Ovary (tissue), 10 donors: ENCODE measurements at regions of chr6 and their contacts with region 1.

Region 1: GRCh38 chr6:33579828-33580714 is at the start of gene BAK1:
- DNase-seq: peak; percentile 87 to 91 (median 88)
- H3K4me3 ChIP-seq: peak within 1 kb of the TSS; percentile 59
- H3K27ac ChIP-seq: peak within 1 kb of the TSS; percentile 46 to 81
- H3K4me1 ChIP-seq: peaks cover 10% of the 10 kb centered on the region
- H3K27me3 ChIP-seq: no peaks in the 10 kb centered on the region
- CTCF ChIP-seq: peak; percentile 58 to 68 (median 62)
- EP300 ChIP-seq: no peak
- POLR2A ChIP-seq: peak; percentile 47
- total RNA-seq, gene BAK1: 3.9 to 16.9 (median 10.4) TPM

Region 2: DNA sequence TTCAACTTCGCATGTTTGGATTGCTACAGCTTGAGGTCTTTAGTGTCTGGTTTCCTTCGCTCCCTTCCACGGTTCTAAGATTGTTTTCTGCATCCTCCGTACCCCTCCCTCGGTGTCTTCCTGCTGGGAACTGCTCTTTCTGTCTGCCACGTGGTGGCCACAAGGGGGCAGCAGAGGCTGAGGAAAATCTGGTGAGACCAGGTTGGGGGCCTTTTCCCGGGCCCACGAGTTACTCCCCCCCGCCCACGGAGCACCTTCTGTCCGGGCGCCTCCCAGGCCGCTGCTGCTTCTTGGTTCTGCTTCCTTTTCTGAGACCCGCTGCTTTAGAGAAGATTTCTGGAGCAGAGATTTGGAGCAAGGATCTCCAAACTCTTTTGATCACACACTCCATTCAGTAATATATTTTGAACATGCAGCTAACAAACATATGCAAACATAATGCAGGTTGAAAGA is 1335.1 kb before region 1 on chr6:
- intact Hi-C with region 1: no loop called
- DNase-seq: peak; percentile 88 to 94 (median 92)
- H3K4me3 ChIP-seq: no peak overlapping the region
- H3K27ac ChIP-seq: peak overlapping the region; percentile 0 to 30
- H3K4me1 ChIP-seq: no peaks in the 10 kb centered on the region
- H3K27me3 ChIP-seq: no peaks in the 10 kb centered on the region
- CTCF ChIP-seq: peak; percentile 82 to 91 (median 90)
- EP300 ChIP-seq: no peak
- POLR2A ChIP-seq: no peak

Region 3: DNA sequence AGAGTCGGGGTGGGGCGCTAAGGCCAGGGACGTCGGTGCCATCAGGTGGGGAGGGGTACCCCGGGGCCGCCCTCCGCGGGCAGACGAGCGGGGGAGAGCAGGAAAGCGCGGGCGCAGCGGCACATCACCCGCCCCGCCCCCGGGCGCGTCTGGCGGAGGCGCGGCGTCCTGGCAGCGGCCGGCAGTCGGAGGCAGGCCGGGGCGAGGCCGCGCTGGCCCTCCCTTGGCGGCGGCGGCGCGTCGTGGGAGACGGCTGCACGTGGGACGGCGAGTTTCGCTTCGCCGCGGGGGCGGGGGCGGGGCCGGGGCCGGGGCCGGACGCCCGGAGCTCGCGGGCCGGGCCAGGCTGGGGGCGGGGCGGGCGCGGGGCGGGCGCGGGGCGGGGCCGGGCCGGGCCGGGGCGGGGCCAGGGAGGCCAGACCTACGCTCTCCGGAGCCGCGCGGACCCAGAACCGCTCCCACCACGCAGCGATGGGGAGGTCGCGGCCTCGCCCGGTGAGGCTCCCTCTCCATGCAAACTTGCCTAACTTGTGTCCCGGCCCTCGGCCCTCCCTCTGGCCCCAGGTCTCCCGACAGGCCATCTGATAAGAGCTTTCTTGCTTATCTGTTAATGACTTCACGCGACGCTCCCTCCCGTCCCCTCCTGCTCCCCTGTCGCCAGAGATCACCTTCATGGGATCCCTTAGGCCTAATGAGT is 53.5 kb after region 1 on chr6:
- intact Hi-C with region 1: loop called in 1 of 4 experiments (anchors 10 kb)
- DNase-seq: peak; percentile 76 to 88 (median 80)
- H3K4me3 ChIP-seq: peak overlapping the region; percentile 30
- H3K27ac ChIP-seq: peak overlapping the region in 1 of 2 donors; percentile 61
- H3K4me1 ChIP-seq: peaks cover 5% of the 10 kb centered on the region
- H3K27me3 ChIP-seq: no peaks in the 10 kb centered on the region
- CTCF ChIP-seq: no peak
- EP300 ChIP-seq: no peak
- POLR2A ChIP-seq: no peak

Region 4: GRCh38 chr6:33700391-33701050 is 120.5 kb after region 1 on chr6:
- intact Hi-C with region 1: loop called (anchors 5 to 10 kb)
- DNase-seq: peak in 4 of 5 donors; percentile 53 to 74 (median 63)
- H3K4me3 ChIP-seq: no peak overlapping the region
- H3K27ac ChIP-seq: peak overlapping the region in 1 of 2 donors; percentile 64
- H3K4me1 ChIP-seq: peaks cover 10% of the 10 kb centered on the region
- H3K27me3 ChIP-seq: no peaks in the 10 kb centered on the region
- CTCF ChIP-seq: peak in 2 of 3 donors; percentile 18 to 33
- EP300 ChIP-seq: no peak
- POLR2A ChIP-seq: no peak

Region 5: GRCh38 chr6:33751771-33752645 is 171.9 kb after region 1 on chr6:
- intact Hi-C with region 1: loop called in 1 of 4 experiments (anchors 10 kb)
- DNase-seq: no peak
- H3K4me3 ChIP-seq: no peak overlapping the region
- H3K27ac ChIP-seq: no peak overlapping the region
- H3K4me1 ChIP-seq: no peaks in the 10 kb centered on the region
- H3K27me3 ChIP-seq: no peaks in the 10 kb centered on the region
- CTCF ChIP-seq: no peak
- EP300 ChIP-seq: no peak
- POLR2A ChIP-seq: no peak

Region 6: GRCh38 chr6:33788694-33789549 is 208.9 kb after region 1 on chr6 and contains the start of gene LEMD2:
- intact Hi-C with region 1: loop called in 1 of 4 experiments (anchors 5 kb)
- DNase-seq: peak; percentile 93 to 98 (median 96)
- H3K4me3 ChIP-seq: peak within 1 kb of the TSS; percentile 82
- H3K27ac ChIP-seq: peak within 1 kb of the TSS; percentile 93 to 99
- H3K4me1 ChIP-seq: peaks cover 22% of the 10 kb centered on the region
- H3K27me3 ChIP-seq: no peaks in the 10 kb centered on the region
- CTCF ChIP-seq: no peak
- EP300 ChIP-seq: no peak
- POLR2A ChIP-seq: peak; percentile 92
- total RNA-seq, gene LEMD2: 43.6 to 66.8 (median 56.7) TPM